Ovary (tissue), 10 donors: ENCODE measurements at regions of chr15 and their contacts with region 1.

Region 1: DNA sequence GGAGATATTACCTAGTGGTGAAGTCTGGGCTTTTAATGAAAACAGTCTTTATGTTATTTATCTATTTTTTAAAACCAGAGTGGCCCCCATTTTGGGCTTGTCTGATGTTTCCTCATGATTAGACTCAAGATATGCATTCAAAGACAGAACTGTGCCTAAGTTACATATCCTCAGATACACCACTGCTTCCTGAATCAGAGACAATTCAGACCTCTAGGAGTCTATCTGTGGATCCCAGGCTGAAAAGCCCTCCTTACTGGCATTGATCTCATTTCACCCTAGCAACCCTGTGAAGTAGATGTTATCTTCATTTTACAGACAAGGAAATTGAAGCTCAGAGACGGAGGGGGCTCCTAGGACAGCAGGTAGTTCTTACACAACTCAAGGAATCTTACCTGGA is 16.8 kb upstream of the TGM5 start:
- DNase-seq: no peak
- H3K4me3 ChIP-seq: no peak overlapping the region
- H3K27ac ChIP-seq: no peak overlapping the region
- H3K4me1 ChIP-seq: no peaks in the 10 kb centered on the region
- H3K27me3 ChIP-seq: no peaks in the 10 kb centered on the region
- CTCF ChIP-seq: no peak
- EP300 ChIP-seq: no peak
- POLR2A ChIP-seq: no peak

Region 2: GRCh38 chr15:43239732-43240491 is 43.6 kb before region 1 on chr15:
- intact Hi-C with region 1: loop called in 1 of 4 experiments (anchors 5 kb)
- DNase-seq: no peak
- H3K4me3 ChIP-seq: no peak overlapping the region
- H3K27ac ChIP-seq: no peak overlapping the region
- H3K4me1 ChIP-seq: no peaks in the 10 kb centered on the region
- H3K27me3 ChIP-seq: no peaks in the 10 kb centered on the region
- CTCF ChIP-seq: no peak
- EP300 ChIP-seq: no peak
- POLR2A ChIP-seq: no peak